ENCODE measurements at regions of chr1 and their contacts with region 1.

Region 1: DNA sequence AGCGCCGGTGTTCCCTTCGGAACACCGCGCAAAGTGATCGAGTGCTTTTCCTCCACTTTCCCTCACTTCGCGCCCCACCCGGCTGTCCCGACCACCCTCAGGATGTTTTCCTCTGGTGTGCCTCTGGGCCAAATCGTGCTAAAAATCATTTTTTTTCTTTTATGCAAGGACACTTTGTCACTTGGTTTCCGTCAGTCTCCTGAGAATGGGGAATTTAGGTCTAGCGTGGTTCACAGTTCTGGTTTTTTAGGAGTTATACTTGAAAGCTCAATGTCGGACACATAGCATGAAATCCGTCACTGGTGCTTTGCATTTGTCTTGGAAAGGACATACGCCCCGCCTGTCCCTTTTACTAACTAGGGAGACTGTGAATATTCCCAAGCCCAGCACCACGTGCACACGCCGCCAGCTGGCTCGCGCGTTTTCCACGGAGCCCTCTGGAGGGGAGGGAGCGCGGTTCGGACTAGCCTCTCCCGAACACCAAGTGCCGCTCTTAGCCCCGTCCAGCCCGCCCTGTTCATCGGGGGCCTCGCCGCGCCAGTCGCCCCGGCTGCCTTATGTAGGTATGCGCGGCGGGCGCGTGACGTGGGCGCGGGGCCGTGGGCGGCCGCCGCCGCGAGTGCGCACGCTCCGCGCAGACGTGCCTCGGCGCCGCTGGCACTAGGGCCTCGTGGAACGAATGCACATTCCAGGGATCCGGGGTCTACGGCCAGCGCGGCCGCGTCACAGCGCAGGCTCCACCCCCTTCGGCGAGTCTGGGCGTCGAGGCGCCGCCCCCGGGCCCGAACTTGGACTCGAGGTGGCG is 572 bp upstream of the IRF2BP2 start:
- DNase-seq: peak; percentile 94
- H3K4me3 Mint-ChIP-seq: peak overlapping the region; percentile 85
- H3K27ac Mint-ChIP-seq: peak overlapping the region; percentile 99
- H3K4me1 Mint-ChIP-seq: peaks cover 37% of the 10 kb centered on the region
- H3K27me3 Mint-ChIP-seq: peaks cover 5% of the 10 kb centered on the region

Region 2: DNA sequence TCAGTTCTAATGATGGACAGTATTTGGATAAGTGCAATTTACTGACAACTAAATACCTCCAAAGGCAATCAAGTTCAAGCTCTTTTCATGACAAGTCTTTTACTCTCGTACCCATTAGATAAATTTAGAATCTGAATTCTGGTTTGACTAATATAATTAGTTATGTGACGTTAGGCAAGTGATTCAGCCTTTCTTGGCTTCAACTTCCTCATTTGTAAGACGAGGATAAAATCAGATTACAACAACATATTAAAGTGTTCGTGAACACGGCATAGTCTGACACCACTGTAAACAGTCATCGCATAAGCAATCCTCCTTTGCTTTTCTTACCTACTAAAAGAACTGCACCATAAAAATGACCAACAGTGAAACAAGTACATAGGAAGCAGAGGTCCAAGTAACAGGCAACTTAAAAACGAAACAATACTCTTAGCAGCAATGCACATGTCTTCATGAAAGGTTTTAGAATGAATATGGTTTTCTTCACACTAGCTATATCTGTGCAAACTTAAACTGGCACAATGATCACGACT is 211.6 kb before region 1 on chr1:
- CTCF ChIA-PET with region 1: no interaction called
- POLR2A ChIA-PET with region 1: no interaction called
- intact Hi-C with region 1: loop called (anchors 5 kb)
- DNase-seq: no peak
- H3K4me3 Mint-ChIP-seq: peak overlapping the region; percentile 66
- H3K27ac Mint-ChIP-seq: peak overlapping the region; percentile 92
- H3K4me1 Mint-ChIP-seq: peaks cover 53% of the 10 kb centered on the region
- H3K27me3 Mint-ChIP-seq: no peaks in the 10 kb centered on the region

Region 3: GRCh38 chr1:234656856-234657654 is 46.5 kb after region 1 on chr1:
- CTCF ChIA-PET with region 1: interaction called, 5 read pairs
- POLR2A ChIA-PET with region 1: interaction called, 5 read pairs
- intact Hi-C with region 1: loop called (anchors 1 kb)
- DNase-seq: peak; percentile 54
- H3K4me3 Mint-ChIP-seq: no peak overlapping the region
- H3K27ac Mint-ChIP-seq: peak overlapping the region; percentile 16
- H3K4me1 Mint-ChIP-seq: peaks cover 15% of the 10 kb centered on the region
- H3K27me3 Mint-ChIP-seq: no peaks in the 10 kb centered on the region

Region 4: DNA sequence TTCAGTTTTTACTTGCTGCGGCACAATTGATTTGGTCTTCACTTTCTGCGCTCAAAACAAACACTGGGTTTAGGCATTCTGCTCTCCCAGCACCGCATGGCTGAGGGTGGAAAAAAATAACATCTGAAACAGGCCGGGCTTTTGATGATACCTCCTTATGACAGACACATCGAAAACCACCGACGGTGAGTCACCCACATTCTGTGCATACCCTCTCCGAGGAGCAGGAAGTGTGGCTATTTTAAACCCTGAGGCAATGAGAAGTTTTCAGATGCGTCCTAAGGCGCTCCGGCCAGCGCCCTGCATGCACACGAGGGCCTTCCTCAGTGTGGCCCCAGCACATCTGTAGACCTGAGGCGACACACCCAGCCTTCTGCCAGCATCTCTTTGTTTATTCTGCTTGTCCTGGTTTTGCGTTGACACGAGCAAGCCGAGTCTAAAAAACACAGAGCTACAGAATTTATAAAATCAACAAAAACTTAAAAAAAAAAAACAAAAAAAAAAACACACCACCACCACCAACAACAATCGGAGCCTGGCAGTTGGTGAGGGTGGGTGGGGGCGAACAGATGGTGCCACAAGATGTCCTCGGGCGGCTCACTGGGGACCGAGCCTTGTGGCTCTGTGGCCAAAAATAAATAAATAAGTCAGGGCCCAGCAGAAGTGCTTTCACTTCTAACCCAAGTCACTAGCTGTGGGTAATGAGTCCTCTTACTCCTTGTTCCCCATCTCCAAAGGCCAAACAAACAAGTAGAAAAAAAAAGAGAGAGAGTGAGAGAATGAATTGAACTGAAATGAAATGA is 162.0 kb after region 1 on chr1:
- CTCF ChIA-PET with region 1: interaction called, 5 read pairs
- POLR2A ChIA-PET with region 1: interaction called, 8 read pairs
- intact Hi-C with region 1: loop called (anchors 1 kb)
- DNase-seq: peak; percentile 95
- H3K4me3 Mint-ChIP-seq: peak overlapping the region; percentile 49
- H3K27ac Mint-ChIP-seq: peak overlapping the region; percentile 84
- H3K4me1 Mint-ChIP-seq: peaks cover 54% of the 10 kb centered on the region
- H3K27me3 Mint-ChIP-seq: no peaks in the 10 kb centered on the region

Region 5: GRCh38 chr1:234970731-234971476 is 360.4 kb after region 1 on chr1:
- CTCF ChIA-PET with region 1: no interaction called
- POLR2A ChIA-PET with region 1: interaction called, 4 read pairs
- intact Hi-C with region 1: loop called (anchors 2 kb)
- DNase-seq: peak; percentile 70
- H3K4me3 Mint-ChIP-seq: peak overlapping the region; percentile 30
- H3K27ac Mint-ChIP-seq: peak overlapping the region; percentile 83
- H3K4me1 Mint-ChIP-seq: peaks cover 67% of the 10 kb centered on the region
- H3K27me3 Mint-ChIP-seq: no peaks in the 10 kb centered on the region

Region 6: DNA sequence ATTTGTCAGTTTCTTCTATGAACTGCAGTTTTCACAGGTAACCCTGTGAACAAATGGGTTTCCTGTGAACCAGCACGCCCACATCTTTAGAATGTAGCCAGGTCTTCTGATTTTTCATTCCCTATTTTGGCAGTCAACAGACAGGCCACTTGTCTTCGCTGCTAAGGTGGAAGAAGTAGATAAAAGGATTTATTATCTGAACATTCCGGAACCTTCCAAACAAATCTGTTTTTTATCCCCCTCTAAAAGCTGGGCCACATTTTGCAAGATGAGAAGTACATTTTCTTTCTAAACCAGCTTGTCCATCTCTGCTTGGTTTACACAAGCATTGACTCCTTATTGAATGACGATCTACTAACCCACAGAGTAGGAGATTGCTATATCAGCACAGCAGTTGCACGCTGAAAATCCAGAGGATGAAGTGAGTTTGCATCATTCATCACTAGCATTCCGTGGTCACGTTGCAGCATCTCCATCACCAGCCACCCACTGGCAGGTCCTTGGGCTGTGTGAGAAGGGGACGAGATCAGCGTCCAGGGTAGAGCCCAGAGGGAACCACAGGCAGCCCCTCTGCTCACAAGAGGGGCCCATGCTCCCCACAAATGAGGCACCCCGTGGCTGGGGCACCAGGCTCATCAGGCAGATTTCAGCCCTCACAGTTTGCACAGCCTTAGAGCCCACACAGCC is 434.6 kb after region 1 on chr1:
- CTCF ChIA-PET with region 1: no interaction called
- POLR2A ChIA-PET with region 1: interaction called, 11 read pairs
- intact Hi-C with region 1: no loop called
- DNase-seq: peak; percentile 70
- H3K4me3 Mint-ChIP-seq: no peak overlapping the region
- H3K27ac Mint-ChIP-seq: peak overlapping the region; percentile 91
- H3K4me1 Mint-ChIP-seq: peaks cover 59% of the 10 kb centered on the region
- H3K27me3 Mint-ChIP-seq: no peaks in the 10 kb centered on the region

Measured in activated CD4-positive, alpha-beta memory T cell treated with anti-CD3 and anti-CD28 coated beads for 36 hours (primary cell).